ENCODE measurements at regions of chr20 and their contacts with region 1.

Region 1: DNA sequence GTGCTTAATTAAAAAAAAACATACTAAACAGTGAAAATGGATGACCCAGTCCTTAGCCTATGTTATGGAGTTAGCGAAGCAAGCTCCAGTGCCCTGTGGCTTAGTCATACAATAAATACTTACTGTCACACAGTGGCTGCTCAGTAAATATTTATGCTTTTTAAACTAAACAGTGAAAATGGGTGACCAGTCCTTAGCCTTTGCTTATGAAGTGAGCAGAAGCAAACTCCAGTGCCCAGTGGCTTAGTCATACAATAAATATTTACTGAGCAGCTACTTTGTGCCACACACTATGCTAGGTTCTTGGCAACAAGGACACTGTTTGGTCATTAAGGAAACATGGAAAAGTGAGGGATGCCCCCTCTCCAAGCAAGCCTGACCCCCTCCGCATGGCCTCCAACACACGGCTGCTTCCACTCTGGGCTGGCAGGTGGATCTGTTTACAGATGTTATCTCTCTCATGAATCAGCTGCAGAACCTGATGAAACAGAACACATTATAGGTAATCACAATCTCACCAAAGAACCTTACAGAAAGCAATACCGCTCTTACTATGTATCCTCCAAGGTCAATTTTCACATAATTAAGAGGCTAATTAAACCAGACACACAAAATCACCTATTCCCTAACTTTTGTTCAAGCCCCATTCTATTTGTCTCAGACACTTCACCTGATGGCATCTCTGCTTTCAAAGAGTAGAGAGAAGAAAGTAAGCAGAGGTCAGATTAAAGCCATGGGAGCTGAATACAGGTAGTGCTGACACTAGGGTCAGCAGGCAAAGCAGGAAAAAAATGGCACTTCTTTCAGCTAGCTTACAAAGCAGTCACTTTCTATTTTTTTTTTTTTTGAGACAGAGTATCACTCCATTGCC is 27.3 kb downstream of the CDK5RAP1 start:
- DNase-seq: peak; percentile 99
- ATAC-seq: peak; percentile 96
- H3K4me3 ChIP-seq: no peak overlapping the region; a peak in 1 of 6 replicates
- H3K27ac ChIP-seq: peak overlapping the region; percentile 70
- H3K4me1 ChIP-seq: peaks cover 38% of the 10 kb centered on the region
- H3K27me3 ChIP-seq: no peaks in the 10 kb centered on the region
- CTCF ChIP-seq: no peak
- EP300 ChIP-seq: peak; percentile 56 to 94
- POLR2A ChIP-seq: no peak
- RAD21 ChIP-seq: no peak; the same call in 1 of the 2 replicates

Region 2: DNA sequence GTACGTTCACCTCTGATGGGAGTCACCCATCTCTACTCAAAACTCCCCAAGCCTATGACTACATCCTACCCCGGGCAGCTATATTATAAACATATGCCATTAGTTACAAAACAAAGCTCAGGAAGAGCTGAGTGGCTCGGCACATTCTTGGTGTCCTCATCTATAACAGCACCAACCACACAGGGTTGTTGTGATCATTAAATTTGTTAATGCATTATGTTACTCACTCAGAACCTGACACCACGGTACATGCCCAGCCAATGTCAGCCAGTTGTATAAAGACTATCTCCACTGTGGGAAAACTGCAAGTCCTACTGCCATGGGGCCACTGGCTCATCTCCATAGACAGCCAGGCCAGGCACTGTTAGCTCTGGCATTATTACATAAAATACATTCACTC is 19.6 kb after region 1 on chr20:
- CTCF ChIA-PET with region 1: no interaction called
- POLR2A ChIA-PET with region 1: interaction called, 26 read pairs
- in situ Hi-C with region 1: no loop called
- intact Hi-C with region 1: no loop called
- DNase-seq: no peak
- ATAC-seq: peak; percentile 44
- H3K4me3 ChIP-seq: no peak overlapping the region
- H3K27ac ChIP-seq: peak overlapping the region; percentile 51
- H3K4me1 ChIP-seq: peaks cover 19% of the 10 kb centered on the region
- H3K27me3 ChIP-seq: no peaks in the 10 kb centered on the region
- CTCF ChIP-seq: no peak
- EP300 ChIP-seq: no peak
- POLR2A ChIP-seq: no peak
- RAD21 ChIP-seq: no peak

Region 3: DNA sequence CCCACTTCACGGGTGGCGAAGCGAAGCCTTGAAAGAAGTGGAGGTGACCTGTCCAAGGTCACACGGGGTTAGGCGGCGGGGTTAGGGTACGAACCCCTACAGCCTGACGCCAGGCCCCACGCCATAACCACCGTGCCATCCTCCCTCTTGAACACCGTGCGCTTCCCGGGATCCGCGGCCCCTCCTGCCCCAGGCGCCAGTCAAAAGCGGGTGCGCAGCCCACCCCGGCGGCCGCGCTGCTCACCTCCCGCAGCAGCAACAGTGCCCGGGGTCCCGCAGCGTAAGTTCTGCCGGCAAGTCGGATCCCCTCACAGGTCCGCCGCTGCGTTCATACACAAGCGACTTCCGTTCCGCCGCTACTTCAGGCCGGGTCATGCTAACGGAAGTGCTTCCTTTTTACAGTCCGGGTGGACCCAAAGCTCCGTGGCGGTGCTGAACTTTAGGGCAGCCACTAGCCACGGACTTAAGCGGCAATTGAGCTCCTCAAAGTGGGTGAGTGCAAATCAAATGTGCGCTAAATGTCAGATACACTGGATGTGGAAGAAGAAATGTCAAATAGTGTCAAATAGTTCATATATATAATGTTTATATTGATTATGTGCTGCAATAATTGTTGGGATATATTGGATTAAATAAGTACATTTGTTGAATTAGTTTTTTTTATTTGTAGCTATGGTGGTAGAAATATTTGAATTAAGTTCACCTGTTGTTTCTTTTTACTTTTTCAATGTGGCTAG is 27.4 kb after region 1 on chr20 and contains the start of gene CDK5RAP1:
- CTCF ChIA-PET with region 1: no interaction called
- POLR2A ChIA-PET with region 1: interaction called, 56 read pairs
- in situ Hi-C with region 1: no loop called
- intact Hi-C with region 1: no loop called
- DNase-seq: peak; percentile 93
- ATAC-seq: peak; percentile 93
- H3K4me3 ChIP-seq: peak within 1 kb of the TSS; percentile 84 to 96 (median 85)
- H3K27ac ChIP-seq: peak within 1 kb of the TSS; percentile 59
- H3K4me1 ChIP-seq: peaks cover 26% of the 10 kb centered on the region
- H3K27me3 ChIP-seq: peaks cover 0 to 3% of the 10 kb centered on the region in 2 experiments; a peak in 1 of 5 replicates
- CTCF ChIP-seq: no peak; the same call in none of the 2 replicates
- EP300 ChIP-seq: peak; percentile 56 to 75; a peak in 3 of 4 replicates
- POLR2A ChIP-seq: peak; percentile 91 to 97
- RAD21 ChIP-seq: peak; percentile 70; the same call in 1 of the 2 replicates
- total RNA-seq, gene CDK5RAP1: 98.2 and 104 TPM in 2 replicates

Region 4: GRCh38 chr20:33443512-33444239 is 69.7 kb after region 1 on chr20 and contains the start of gene SNTA1:
- CTCF ChIA-PET with region 1: no interaction called
- POLR2A ChIA-PET with region 1: interaction called, 36 read pairs
- in situ Hi-C with region 1: no loop called
- intact Hi-C with region 1: loop called (anchors 1 kb)
- DNase-seq: peak; percentile 92
- ATAC-seq: peak; percentile 85
- H3K4me3 ChIP-seq: peak within 1 kb of the TSS; percentile 64 to 95 (median 72)
- H3K27ac ChIP-seq: peak within 1 kb of the TSS; percentile 45
- H3K4me1 ChIP-seq: peaks cover 54% of the 10 kb centered on the region
- H3K27me3 ChIP-seq: peaks cover 0 to 10% of the 10 kb centered on the region in 2 experiments; a peak in 2 of 5 replicates
- CTCF ChIP-seq: no peak
- EP300 ChIP-seq: 0 out of 4 replicates have a peak, but pooled peaks of 1 of the 2 experiments have one; percentile 7
- POLR2A ChIP-seq: no peak; a peak in 1 of 4 replicates
- RAD21 ChIP-seq: peak; percentile 84
- total RNA-seq, gene SNTA1: 14.8 and 16.4 TPM in 2 replicates